CD8-positive, alpha-beta memory T cell (primary cell): ENCODE measurements at regions of chr6 and their contacts with region 1.

Region 1: DNA sequence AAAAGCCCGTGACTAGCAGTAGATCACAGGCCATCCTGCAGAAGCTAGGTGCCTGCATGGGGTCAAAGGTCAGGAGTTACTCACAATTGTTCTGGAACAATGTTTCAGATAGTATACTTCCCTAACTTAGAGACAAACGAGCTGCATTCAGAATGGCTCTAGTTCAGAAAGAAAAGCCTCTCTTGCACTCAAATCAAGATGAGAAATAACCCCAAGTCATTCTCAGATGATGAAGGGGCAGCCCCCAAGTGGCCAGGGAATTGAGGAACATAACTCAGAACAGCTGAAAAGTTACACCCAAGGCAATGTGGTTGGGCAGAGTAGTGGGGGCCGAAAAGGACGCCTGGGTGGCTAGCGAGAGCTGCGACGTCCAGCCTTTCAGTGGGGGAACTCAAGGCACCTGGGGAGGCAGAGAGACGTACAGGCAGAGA is 27.8 kb downstream of the FYN start:
- DNase-seq: no peak
- H3K4me3 ChIP-seq: peak overlapping the region; percentile 27
- H3K4me3 Mint-ChIP-seq: peak overlapping the region in 2 of 7 donors; percentile 63 to 74
- H3K27ac ChIP-seq: no peak overlapping the region
- H3K27ac Mint-ChIP-seq: peak overlapping the region in 1 of 8 donors; percentile 84
- H3K4me1 ChIP-seq: peaks cover 98% of the 10 kb centered on the region
- H3K4me1 Mint-ChIP-seq: peaks cover 17% of the 10 kb centered on the region in 3 donors
- H3K27me3 ChIP-seq: no peaks in the 10 kb centered on the region
- H3K27me3 Mint-ChIP-seq: peaks cover 0 to 5% of the 10 kb centered on the region in 2 donors

Region 2: GRCh38 chr6:111823831-111824607 is 21.4 kb before region 1 on chr6:
- CTCF ChIA-PET with region 1: interaction called, 15 read pairs
- POLR2A ChIA-PET with region 1: interaction called, 11 read pairs
- DNase-seq: peak in 1 of 5 donors; percentile 57
- H3K4me3 ChIP-seq: peak overlapping the region; percentile 6
- H3K4me3 Mint-ChIP-seq: peak overlapping the region; percentile 29 to 64 (median 38)
- H3K27ac ChIP-seq: peak overlapping the region; percentile 4
- H3K27ac Mint-ChIP-seq: peak overlapping the region; percentile 72 to 97 (median 89)
- H3K4me1 ChIP-seq: peaks cover 61% of the 10 kb centered on the region
- H3K4me1 Mint-ChIP-seq: peaks cover 72 to 79% (median 78%) of the 10 kb centered on the region in 3 donors
- H3K27me3 ChIP-seq: no peaks in the 10 kb centered on the region
- H3K27me3 Mint-ChIP-seq: peaks cover 0 to 1% of the 10 kb centered on the region in 2 donors

Region 3: GRCh38 chr6:111832833-111833418 is 12.5 kb before region 1 on chr6:
- CTCF ChIA-PET with region 1: interaction called, 10 read pairs
- POLR2A ChIA-PET with region 1: interaction called, 6 read pairs
- DNase-seq: no peak
- H3K4me3 ChIP-seq: peak overlapping the region; percentile 5
- H3K4me3 Mint-ChIP-seq: peak overlapping the region; percentile 44 to 71 (median 60)
- H3K27ac ChIP-seq: no peak overlapping the region
- H3K27ac Mint-ChIP-seq: peak overlapping the region in 7 of 8 donors; percentile 75 to 98 (median 84)
- H3K4me1 ChIP-seq: peaks cover 70% of the 10 kb centered on the region
- H3K4me1 Mint-ChIP-seq: peaks cover under 1 to 77% (median 1%) of the 10 kb centered on the region in 3 donors
- H3K27me3 ChIP-seq: no peaks in the 10 kb centered on the region
- H3K27me3 Mint-ChIP-seq: no peaks in the 10 kb centered on the region

Region 4: DNA sequence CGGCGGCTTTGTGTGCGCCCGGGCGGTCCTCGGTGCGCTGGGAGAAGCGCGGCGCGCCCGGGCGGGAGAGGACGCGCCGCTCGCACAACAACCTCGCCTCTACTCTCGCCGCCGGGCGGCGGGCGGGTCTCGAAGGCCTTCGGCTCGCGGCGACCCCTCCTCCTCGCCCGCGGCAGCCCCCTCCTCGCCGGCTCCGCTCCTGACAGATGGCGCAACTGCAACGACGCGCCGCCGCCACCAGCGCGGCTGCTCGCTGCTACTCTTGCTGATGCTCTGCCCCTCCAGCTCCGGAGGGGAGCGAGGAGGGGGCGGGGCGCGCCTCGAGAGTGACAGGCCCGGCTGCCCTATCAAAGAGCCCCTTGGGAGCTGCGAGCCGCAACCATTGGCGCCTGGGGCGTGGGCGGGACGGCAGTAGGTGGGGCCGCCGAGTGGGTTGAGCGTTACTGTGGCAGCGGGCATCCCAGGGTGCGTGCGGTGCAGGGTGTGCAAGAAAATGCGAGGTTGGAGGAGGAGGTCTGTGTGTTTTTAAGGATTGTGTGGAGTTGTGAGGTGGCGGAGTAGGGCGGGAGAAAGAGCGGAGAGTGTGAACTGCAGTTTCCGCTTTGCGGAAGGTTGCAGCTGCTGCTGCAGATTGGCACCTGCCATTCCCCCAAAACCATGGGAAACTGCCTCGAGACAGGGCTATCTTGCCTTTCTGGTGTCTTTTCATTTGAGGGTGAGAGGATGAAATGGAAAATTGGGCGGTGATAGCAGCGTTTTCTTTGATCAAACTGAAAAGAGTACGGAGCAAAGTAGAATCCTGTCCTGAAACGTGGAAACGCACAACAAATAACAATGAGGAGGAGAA is 27.9 kb after region 1 on chr6 and contains the start of gene FYN:
- CTCF ChIA-PET with region 1: interaction called, 13 read pairs
- POLR2A ChIA-PET with region 1: interaction called, 3 read pairs
- DNase-seq: peak; percentile 97 to 99 (median 98)
- H3K4me3 ChIP-seq: peak within 1 kb of the TSS; percentile 88
- H3K4me3 Mint-ChIP-seq: peak within 1 kb of the TSS; percentile 94 to 99 (median 98)
- H3K27ac ChIP-seq: peak within 1 kb of the TSS; percentile 85
- H3K27ac Mint-ChIP-seq: peak within 1 kb of the TSS; percentile 89 to 99 (median 97)
- H3K4me1 ChIP-seq: peaks cover 35% of the 10 kb centered on the region
- H3K4me1 Mint-ChIP-seq: peaks cover 39 to 45% (median 43%) of the 10 kb centered on the region in 3 donors
- H3K27me3 ChIP-seq: no peaks in the 10 kb centered on the region
- H3K27me3 Mint-ChIP-seq: no peaks in the 10 kb centered on the region
- total RNA-seq, gene FYN: 481 to 491 TPM